Activated CD4-positive, alpha-beta T cell treated with anti-CD3 and anti-CD28 coated beads for 36 hours (primary cell): ENCODE measurements at regions of chr11 and their contacts with region 1.

Region 1: DNA sequence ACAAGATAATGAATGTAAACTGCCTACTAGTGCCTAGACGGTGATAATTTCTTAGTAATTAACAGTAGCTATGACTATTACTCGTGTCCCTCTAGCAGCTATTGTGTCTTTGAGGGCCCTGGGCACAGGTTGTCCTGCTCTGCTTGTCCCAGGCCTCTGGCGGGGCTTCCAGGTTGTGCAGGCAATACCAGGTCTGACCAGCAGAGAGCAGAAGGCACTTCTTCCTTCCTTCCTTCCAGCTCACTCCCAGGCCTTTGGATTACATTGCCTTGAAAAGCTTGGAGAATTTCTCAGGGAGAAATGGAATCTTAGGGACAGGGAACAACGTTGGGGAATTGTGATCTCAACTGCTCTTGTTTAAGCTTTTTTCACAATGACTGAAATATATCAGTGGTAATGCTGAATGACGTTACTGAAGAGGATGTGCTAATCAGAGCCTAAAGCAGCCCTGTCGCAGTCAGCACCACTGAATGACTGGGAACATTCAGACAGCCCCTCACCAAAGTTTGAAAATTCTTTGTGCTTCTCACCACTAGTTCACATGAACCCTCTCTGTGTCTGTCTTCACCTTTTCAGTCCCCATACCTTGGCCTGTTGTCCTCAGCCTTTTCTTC is 8.4 kb upstream of the CCKBR start:
- DNase-seq: peak; percentile 77
- ATAC-seq: peak; percentile 86
- H3K4me3 Mint-ChIP-seq: no peak overlapping the region
- H3K27ac Mint-ChIP-seq: no peak overlapping the region
- H3K4me1 Mint-ChIP-seq: no peaks in the 10 kb centered on the region
- H3K27me3 Mint-ChIP-seq: no peaks in the 10 kb centered on the region

Region 2: GRCh38 chr11:6240781-6241180 is 10.4 kb before region 1 on chr11:
- CTCF ChIA-PET with region 1: interaction called, 23 read pairs
- POLR2A ChIA-PET with region 1: no interaction called
- intact Hi-C with region 1: no loop called
- DNase-seq: no peak
- ATAC-seq: no peak
- H3K4me3 Mint-ChIP-seq: no peak overlapping the region
- H3K27ac Mint-ChIP-seq: no peak overlapping the region
- H3K4me1 Mint-ChIP-seq: no peaks in the 10 kb centered on the region
- H3K27me3 Mint-ChIP-seq: peaks cover 6% of the 10 kb centered on the region

Region 3: GRCh38 chr11:6285019-6285418 is 33.8 kb after region 1 on chr11:
- CTCF ChIA-PET with region 1: interaction called, 11 read pairs
- POLR2A ChIA-PET with region 1: no interaction called
- intact Hi-C with region 1: no loop called
- DNase-seq: no peak
- ATAC-seq: no peak
- H3K4me3 Mint-ChIP-seq: no peak overlapping the region
- H3K27ac Mint-ChIP-seq: no peak overlapping the region
- H3K4me1 Mint-ChIP-seq: no peaks in the 10 kb centered on the region
- H3K27me3 Mint-ChIP-seq: peaks cover 42% of the 10 kb centered on the region

Region 4: GRCh38 chr11:7341551-7341950 is 1090.3 kb after region 1 on chr11:
- CTCF ChIA-PET with region 1: no interaction called
- POLR2A ChIA-PET with region 1: no interaction called
- intact Hi-C with region 1: no loop called
- DNase-seq: no peak
- ATAC-seq: peak; percentile 30
- H3K4me3 Mint-ChIP-seq: no peak overlapping the region
- H3K27ac Mint-ChIP-seq: no peak overlapping the region
- H3K4me1 Mint-ChIP-seq: no peaks in the 10 kb centered on the region
- H3K27me3 Mint-ChIP-seq: peaks cover 14% of the 10 kb centered on the region